ENCODE measurements at regions of chr12 and their contacts with region 1.

Region 1: GRCh38 chr12:31874961-31875608 is 84.1 kb upstream of the RESF1 start:
- DNase-seq: peak; percentile 93
- H3K4me3 ChIP-seq: no peak overlapping the region
- H3K27ac ChIP-seq: peak overlapping the region; percentile 83
- H3K4me1 ChIP-seq: peaks cover 28% of the 10 kb centered on the region
- H3K27me3 ChIP-seq: no peaks in the 10 kb centered on the region
- CTCF ChIP-seq: no peak
- POLR2A ChIP-seq: no peak

Region 2: GRCh38 chr12:31728917-31729640 is 146.0 kb before region 1 on chr12 and contains the start of gene AMN1:
- CTCF ChIA-PET with region 1: interaction called, 4 read pairs
- POLR2A ChIA-PET with region 1: interaction called, 3 read pairs
- dilution Hi-C with region 1: no loop called
- intact Hi-C with region 1: loop called (anchors 1 kb)
- DNase-seq: peak; percentile 100
- H3K4me3 ChIP-seq: peak within 1 kb of the TSS; percentile 24 to 75 (median 55)
- H3K27ac ChIP-seq: peak within 1 kb of the TSS; percentile 90
- H3K4me1 ChIP-seq: peaks cover 37% of the 10 kb centered on the region
- H3K27me3 ChIP-seq: no peaks in the 10 kb centered on the region
- CTCF ChIP-seq: no peak
- POLR2A ChIP-seq: peak; percentile 7
- total RNA-seq, gene AMN1: 8.5 and 11.8 TPM in 2 replicates

Region 3: DNA sequence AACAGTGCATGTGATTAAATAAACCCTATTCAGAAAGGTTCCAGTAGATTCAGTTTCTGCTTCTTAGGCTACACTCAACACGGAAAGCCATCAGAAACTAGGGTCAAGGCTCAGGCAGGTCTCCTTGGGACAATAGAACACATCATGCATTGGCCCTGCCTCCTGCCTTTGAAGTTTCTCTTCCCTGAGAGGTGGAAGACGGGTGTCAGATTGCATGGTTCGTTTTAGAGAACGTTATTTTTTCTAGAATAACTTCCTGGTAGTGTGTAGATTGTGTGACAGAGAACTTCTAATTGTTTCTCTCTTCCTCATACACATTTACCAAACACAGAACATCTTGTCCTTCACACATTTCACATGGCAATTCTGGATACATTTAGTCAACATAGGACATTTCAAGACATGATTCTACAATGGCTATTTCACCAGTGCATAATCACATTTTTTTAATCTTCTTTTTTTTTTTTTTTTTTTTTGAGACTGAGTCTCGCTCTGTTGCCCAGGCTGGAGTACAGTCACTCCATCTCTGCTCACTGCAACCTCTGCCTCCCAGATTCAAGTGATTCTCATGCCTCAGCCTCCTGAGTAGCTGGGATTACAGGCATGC is 39.7 kb before region 1 on chr12:
- CTCF ChIA-PET with region 1: no interaction called
- POLR2A ChIA-PET with region 1: no interaction called
- dilution Hi-C with region 1: no loop called
- intact Hi-C with region 1: no loop called
- DNase-seq: peak; percentile 15
- H3K4me3 ChIP-seq: no peak overlapping the region
- H3K27ac ChIP-seq: no peak overlapping the region
- H3K4me1 ChIP-seq: no peaks in the 10 kb centered on the region
- H3K27me3 ChIP-seq: no peaks in the 10 kb centered on the region
- CTCF ChIP-seq: no peak
- POLR2A ChIP-seq: no peak

Region 4: GRCh38 chr12:31896514-31897039 is 21.5 kb after region 1 on chr12:
- CTCF ChIA-PET with region 1: interaction called, 5 read pairs
- POLR2A ChIA-PET with region 1: no interaction called
- dilution Hi-C with region 1: no loop called
- intact Hi-C with region 1: loop called (anchors 1 kb)
- DNase-seq: peak; percentile 91
- H3K4me3 ChIP-seq: peak overlapping the region in 1 of 3 experiments; percentile 30
- H3K27ac ChIP-seq: peak overlapping the region; percentile 74
- H3K4me1 ChIP-seq: peaks cover 18% of the 10 kb centered on the region
- H3K27me3 ChIP-seq: no peaks in the 10 kb centered on the region
- CTCF ChIP-seq: no peak
- POLR2A ChIP-seq: no peak

Region 5: GRCh38 chr12:32032205-32032810 is 157.2 kb after region 1 on chr12:
- CTCF ChIA-PET with region 1: no interaction called
- POLR2A ChIA-PET with region 1: no interaction called
- dilution Hi-C with region 1: no loop called
- intact Hi-C with region 1: loop called (anchors 10 kb)
- DNase-seq: peak; percentile 87
- H3K4me3 ChIP-seq: no peak overlapping the region
- H3K27ac ChIP-seq: no peak overlapping the region
- H3K4me1 ChIP-seq: peaks cover 33% of the 10 kb centered on the region
- H3K27me3 ChIP-seq: no peaks in the 10 kb centered on the region
- CTCF ChIP-seq: no peak
- POLR2A ChIP-seq: no peak

Measured in endothelial cell of umbilical vein (primary cell).